Left ventricle myocardium inferior (tissue), 1 donor: ENCODE measurements at regions of chr9 and their contacts with region 1.

Region 1: DNA sequence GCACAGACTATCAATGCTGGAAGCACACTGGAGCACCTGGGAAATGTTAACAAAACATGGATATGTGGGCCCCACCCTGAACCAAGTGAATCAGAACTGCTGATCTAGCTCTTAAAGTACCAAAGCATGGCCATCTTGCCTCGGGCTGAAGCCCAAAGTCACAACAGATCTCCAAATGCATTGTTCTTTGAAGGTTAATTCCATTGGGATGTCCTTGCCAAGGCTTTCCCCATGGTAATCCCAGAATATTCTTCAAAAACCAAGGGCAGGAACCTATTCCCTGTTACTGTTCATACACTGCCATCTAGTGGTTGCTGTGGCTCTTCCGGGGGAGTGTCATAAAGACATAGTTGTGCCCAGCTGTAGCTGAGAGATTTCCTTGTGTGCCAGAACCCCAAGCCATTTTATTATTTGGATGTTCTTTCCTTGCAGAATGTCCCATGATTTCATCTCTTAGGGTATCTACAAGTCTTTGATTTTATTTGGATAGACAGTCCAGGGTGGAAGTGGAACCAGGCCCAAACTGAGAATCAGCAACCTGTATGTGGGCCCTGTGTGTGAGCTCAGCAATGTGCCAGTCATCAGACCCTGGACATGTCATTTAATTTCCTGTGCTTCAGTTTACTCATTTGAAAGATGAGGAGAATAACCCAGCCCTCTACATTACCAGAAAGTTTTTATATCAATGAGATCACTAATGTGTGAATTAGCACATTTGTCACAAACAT is 290.0 kb downstream of the ACTL7B start:
- DNase-seq: no peak
- H3K4me3 ChIP-seq: no peak overlapping the region
- H3K27ac ChIP-seq: no peak overlapping the region
- H3K4me1 ChIP-seq: peaks cover 4% of the 10 kb centered on the region
- H3K27me3 ChIP-seq: peaks cover 2% of the 10 kb centered on the region
- CTCF ChIP-seq: peak; percentile 90

Region 2: GRCh38 chr9:107465467-107466451 is 1100.1 kb before region 1 on chr9:
- intact Hi-C with region 1: loop called (anchors 10 kb)
- DNase-seq: peak; percentile 74
- H3K4me3 ChIP-seq: peak overlapping the region; percentile 76
- H3K27ac ChIP-seq: peak overlapping the region; percentile 55
- H3K4me1 ChIP-seq: peaks cover 15% of the 10 kb centered on the region
- H3K27me3 ChIP-seq: no peaks in the 10 kb centered on the region
- CTCF ChIP-seq: peak; percentile 98

Region 3: DNA sequence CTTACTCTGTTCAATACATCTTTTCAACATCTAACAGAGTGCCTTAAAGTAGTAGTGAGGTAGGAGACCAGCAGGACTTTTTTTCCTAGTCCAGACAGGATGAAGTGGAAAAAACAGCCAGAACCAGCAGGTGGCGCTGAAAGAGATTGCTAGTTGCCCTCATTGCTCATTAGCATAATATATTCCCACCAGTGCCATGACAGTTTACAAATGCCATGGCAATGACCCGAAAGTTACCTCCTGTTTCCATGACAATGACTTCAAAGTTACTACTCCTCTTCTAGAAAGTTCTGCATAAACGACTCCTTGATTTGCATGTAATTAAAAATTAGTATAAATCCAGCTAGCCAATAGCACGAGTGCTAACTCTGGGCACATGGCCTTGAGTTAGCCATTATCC is 97.4 kb before region 1 on chr9:
- intact Hi-C with region 1: loop called (anchors 5 kb)
- DNase-seq: no peak
- H3K4me3 ChIP-seq: no peak overlapping the region
- H3K27ac ChIP-seq: no peak overlapping the region
- H3K4me1 ChIP-seq: peaks cover 11% of the 10 kb centered on the region
- H3K27me3 ChIP-seq: no peaks in the 10 kb centered on the region
- CTCF ChIP-seq: peak; percentile 56